ENCODE measurements at regions of chr10 and their contacts with region 1.

Region 1: DNA sequence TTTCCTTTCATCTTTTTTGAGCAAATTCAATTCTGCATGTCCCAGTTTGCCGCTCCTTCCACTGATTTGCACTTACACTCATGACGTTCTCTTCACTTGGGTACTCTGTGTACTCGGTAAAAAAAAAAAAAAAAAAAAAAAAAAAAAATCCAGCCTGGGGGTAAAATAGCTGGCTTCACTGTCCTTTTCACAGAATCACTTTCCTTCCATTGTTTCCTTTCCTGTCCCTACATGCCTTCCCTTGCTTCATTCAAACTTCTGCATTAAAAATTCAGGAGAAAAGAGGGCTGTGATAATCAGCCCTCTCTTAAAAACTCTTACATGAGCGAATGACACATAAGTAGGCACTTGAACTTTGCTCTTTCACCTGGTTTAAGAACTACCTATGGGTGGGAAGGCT is 8.7 kb downstream of the ANKRD1 start:
- DNase-seq: no peak
- ATAC-seq: no peak
- H3K4me3 Mint-ChIP-seq: no peak overlapping the region
- H3K27ac Mint-ChIP-seq: no peak overlapping the region
- H3K4me1 Mint-ChIP-seq: peaks cover 2% of the 10 kb centered on the region
- H3K27me3 Mint-ChIP-seq: peaks cover 7% of the 10 kb centered on the region

Region 2: DNA sequence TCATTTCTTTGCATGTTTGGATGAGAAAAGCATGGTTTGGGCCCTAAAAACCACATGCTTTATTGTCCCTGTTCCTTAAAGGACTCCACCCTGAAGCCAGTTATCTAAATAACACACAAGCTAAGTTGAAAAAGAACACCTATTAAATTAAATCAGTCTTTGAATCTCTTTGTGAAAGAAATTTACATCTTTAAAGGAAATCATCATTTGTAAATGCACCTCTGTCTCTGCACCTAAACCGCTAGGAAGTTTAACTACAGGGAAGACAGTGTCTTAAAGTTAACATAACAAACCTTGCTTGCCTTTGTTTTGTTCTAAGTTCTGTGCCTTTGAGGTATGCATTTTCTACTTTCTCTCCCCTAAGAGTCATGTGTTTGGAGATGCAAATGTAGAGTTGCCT is 107.0 kb before region 1 on chr10:
- CTCF ChIA-PET with region 1: no interaction called
- POLR2A ChIA-PET with region 1: no interaction called
- DNase-seq: no peak
- ATAC-seq: no peak
- H3K4me3 Mint-ChIP-seq: no peak overlapping the region
- H3K27ac Mint-ChIP-seq: no peak overlapping the region
- H3K4me1 Mint-ChIP-seq: no peaks in the 10 kb centered on the region
- H3K27me3 Mint-ChIP-seq: peaks cover 2% of the 10 kb centered on the region

Region 3: GRCh38 chr10:90879062-90879461 is 33.1 kb before region 1 on chr10:
- CTCF ChIA-PET with region 1: interaction called, 10 read pairs
- POLR2A ChIA-PET with region 1: no interaction called
- DNase-seq: no peak
- ATAC-seq: no peak
- H3K4me3 Mint-ChIP-seq: no peak overlapping the region
- H3K27ac Mint-ChIP-seq: no peak overlapping the region
- H3K4me1 Mint-ChIP-seq: peaks cover 4% of the 10 kb centered on the region
- H3K27me3 Mint-ChIP-seq: no peaks in the 10 kb centered on the region

Region 4: GRCh38 chr10:90893190-90893589 is 19.0 kb before region 1 on chr10:
- CTCF ChIA-PET with region 1: interaction called, 10 read pairs
- POLR2A ChIA-PET with region 1: no interaction called
- DNase-seq: no peak
- ATAC-seq: no peak
- H3K4me3 Mint-ChIP-seq: no peak overlapping the region
- H3K27ac Mint-ChIP-seq: no peak overlapping the region
- H3K4me1 Mint-ChIP-seq: peaks cover 18% of the 10 kb centered on the region
- H3K27me3 Mint-ChIP-seq: no peaks in the 10 kb centered on the region

Region 5: GRCh38 chr10:90947030-90947940 is 35.1 kb after region 1 on chr10:
- CTCF ChIA-PET with region 1: interaction called, 25 read pairs
- POLR2A ChIA-PET with region 1: interaction called, 9 read pairs
- DNase-seq: peak; percentile 34
- ATAC-seq: peak; percentile 88
- H3K4me3 Mint-ChIP-seq: peak overlapping the region; percentile 38
- H3K27ac Mint-ChIP-seq: peak overlapping the region; percentile 78
- H3K4me1 Mint-ChIP-seq: peaks cover 22% of the 10 kb centered on the region
- H3K27me3 Mint-ChIP-seq: peaks cover 5% of the 10 kb centered on the region

Region 6: GRCh38 chr10:90969947-90970684 is 57.9 kb after region 1 on chr10:
- CTCF ChIA-PET with region 1: interaction called, 18 read pairs
- POLR2A ChIA-PET with region 1: no interaction called
- DNase-seq: no peak
- ATAC-seq: no peak
- H3K4me3 Mint-ChIP-seq: no peak overlapping the region
- H3K27ac Mint-ChIP-seq: no peak overlapping the region
- H3K4me1 Mint-ChIP-seq: no peaks in the 10 kb centered on the region
- H3K27me3 Mint-ChIP-seq: peaks cover 13% of the 10 kb centered on the region

Region 7: GRCh38 chr10:91096274-91096673 is 184.1 kb after region 1 on chr10:
- CTCF ChIA-PET with region 1: no interaction called
- POLR2A ChIA-PET with region 1: no interaction called
- DNase-seq: no peak
- ATAC-seq: no peak
- H3K4me3 Mint-ChIP-seq: no peak overlapping the region
- H3K27ac Mint-ChIP-seq: no peak overlapping the region
- H3K4me1 Mint-ChIP-seq: peaks cover 8% of the 10 kb centered on the region
- H3K27me3 Mint-ChIP-seq: no peaks in the 10 kb centered on the region